Panc1 (cell line): ENCODE measurements at regions of chr5 and their contacts with region 1.

Region 1: GRCh38 chr5:130727830-130728229 is 437.2 kb downstream of the HINT1 start:
- DNase-seq: no peak
- ATAC-seq: no peak
- H3K4me3 ChIP-seq: no peak overlapping the region
- H3K27ac ChIP-seq: no peak overlapping the region
- H3K4me1 ChIP-seq: no peaks in the 10 kb centered on the region
- H3K27me3 ChIP-seq: no peaks in the 10 kb centered on the region
- CTCF ChIP-seq: no peak

Region 2: DNA sequence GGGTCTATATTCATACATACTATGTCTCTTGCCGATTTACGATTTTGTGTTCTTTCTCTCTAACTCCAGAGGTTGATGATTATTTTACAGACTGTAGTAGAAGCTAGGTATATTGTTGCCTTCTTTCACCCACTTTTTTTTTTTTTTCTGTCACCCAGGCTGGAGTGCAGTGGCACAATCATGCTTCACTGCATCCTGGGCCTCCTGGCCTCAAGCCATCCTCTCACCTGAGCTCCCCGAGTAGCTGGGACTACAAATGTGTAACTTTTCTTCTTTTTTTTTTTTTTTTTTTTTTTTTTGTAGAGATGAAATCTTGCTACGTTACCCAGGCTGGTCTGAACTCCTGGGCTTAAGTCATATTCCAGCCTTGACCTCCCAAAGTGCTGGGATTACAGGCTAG is 727.4 kb before region 1 on chr5:
- CTCF ChIA-PET with region 1: no interaction called
- POLR2A ChIA-PET with region 1: interaction called, 11 read pairs
- in situ Hi-C with region 1: no loop called
- intact Hi-C with region 1: no loop called
- DNase-seq: no peak
- ATAC-seq: no peak
- H3K4me3 ChIP-seq: no peak overlapping the region
- H3K27ac ChIP-seq: no peak overlapping the region
- H3K4me1 ChIP-seq: no peaks in the 10 kb centered on the region
- H3K27me3 ChIP-seq: no peaks in the 10 kb centered on the region
- CTCF ChIP-seq: no peak